Aorta (tissue), 5 donors: ENCODE measurements at regions of chr7 and their contacts with region 1.

Region 1: GRCh38 chr7:33243319-33243881 is 114.0 kb downstream of the BBS9 start:
- DNase-seq: no peak
- ATAC-seq: no peak
- H3K4me3 ChIP-seq: no peak overlapping the region
- H3K27ac ChIP-seq: no peak overlapping the region
- H3K4me1 ChIP-seq: no peaks in the 10 kb centered on the region
- H3K27me3 ChIP-seq: no peaks in the 10 kb centered on the region

Region 2: DNA sequence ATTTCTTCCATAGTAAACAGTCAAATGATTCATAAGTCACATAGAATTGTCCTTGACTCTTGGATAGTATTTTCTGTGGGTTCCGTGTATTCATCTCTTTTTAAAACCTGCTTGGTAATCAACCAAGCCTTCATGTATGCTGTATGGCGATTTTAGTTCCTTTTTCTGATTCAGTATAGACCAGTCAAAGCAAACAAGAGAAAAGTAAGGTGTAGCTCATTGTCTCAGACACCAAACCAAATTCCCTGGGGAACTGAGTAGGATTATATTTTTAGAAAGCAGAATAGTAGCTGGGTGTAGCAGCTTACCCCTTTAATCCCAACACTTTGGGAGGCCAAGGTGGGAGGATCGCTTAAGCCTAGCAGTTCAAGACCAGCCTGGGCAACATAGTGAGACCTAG is 126.5 kb after region 1 on chr7:
- intact Hi-C with region 1: no loop called
- DNase-seq: no peak
- ATAC-seq: no peak
- H3K4me3 ChIP-seq: no peak overlapping the region
- H3K27ac ChIP-seq: no peak overlapping the region
- H3K4me1 ChIP-seq: no peaks in the 10 kb centered on the region
- H3K27me3 ChIP-seq: no peaks in the 10 kb centered on the region

Region 3: DNA sequence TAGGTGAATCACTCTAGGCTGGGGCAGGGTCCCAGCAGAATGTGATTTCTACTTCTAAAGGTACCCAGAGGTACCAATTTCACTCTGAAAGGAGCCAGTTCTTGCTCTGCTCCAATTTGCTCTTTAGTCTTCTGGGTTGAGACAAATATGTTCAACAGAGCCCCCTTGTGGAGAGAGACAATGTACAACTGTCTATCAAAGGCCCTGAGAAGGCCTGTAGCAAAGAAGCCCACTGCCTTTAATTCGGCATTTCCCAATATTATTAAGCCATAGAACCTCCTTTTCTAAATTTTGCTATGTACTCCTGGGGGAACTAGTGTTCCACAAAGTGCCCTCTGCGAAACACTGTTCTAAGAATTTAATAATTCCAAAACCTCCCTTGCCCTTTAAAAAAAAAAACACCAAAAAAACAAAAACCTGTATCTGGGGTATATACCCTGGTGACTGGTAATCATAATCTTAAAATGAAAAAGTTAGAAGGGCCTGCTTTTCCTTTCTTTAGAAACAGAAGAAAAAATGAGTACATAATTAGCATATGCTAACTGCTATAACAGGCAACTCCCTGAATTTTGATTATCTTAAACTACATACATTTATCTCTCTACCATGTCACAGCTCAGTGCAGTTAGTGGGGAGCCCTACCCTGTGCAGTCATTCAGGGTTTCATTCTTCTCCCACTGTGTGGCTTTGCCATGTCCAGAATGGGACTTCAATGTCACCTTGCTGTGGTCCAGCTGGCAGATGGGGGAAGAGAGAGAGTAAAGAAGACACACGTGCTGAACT is 501.1 kb after region 1 on chr7:
- intact Hi-C with region 1: loop called (anchors 10 kb)
- DNase-seq: no peak
- ATAC-seq: no peak
- H3K4me3 ChIP-seq: no peak overlapping the region
- H3K27ac ChIP-seq: no peak overlapping the region
- H3K4me1 ChIP-seq: no peaks in the 10 kb centered on the region
- H3K27me3 ChIP-seq: no peaks in the 10 kb centered on the region

Region 4: DNA sequence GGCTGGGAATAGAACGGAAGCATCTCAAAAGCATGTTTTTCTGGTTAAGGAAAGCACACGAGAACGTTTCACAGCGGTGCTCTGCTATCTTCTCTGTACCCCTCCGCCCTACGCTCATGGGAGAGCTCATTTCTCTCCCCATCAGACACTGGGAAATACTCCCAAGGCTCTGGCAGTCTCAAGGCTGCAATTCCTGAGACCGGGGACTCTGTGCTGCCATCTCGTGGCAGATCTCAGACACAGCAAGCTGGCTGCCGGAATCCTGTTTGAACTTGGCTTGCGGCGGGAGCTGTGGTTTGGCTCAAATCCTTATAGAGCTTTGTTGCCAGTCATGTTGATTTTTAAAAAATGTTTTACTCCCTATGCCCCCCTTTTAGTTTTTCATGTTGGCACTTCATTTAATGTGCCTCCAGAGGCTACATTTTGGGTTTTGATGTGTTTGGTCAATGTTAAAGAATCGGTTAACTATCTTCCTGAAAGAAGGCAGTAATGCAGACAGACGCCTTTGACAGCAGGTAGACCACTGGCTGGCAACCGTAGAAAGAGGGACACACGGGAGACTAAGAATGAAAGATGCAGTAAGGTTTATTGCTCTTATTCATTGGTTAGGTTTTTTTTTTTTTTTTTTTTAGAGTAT is 689.5 kb after region 1 on chr7:
- intact Hi-C with region 1: loop called (anchors 5 kb)
- DNase-seq: peak; percentile 86 to 92
- ATAC-seq: peak; percentile 92
- H3K4me3 ChIP-seq: peak overlapping the region in 1 of 2 donors; percentile 41
- H3K27ac ChIP-seq: no peak overlapping the region
- H3K4me1 ChIP-seq: peaks cover 0 to 4% of the 10 kb centered on the region in 2 donors
- H3K27me3 ChIP-seq: no peaks in the 10 kb centered on the region